ENCODE measurements at regions of chr9 and their contacts with region 1.

Region 1: DNA sequence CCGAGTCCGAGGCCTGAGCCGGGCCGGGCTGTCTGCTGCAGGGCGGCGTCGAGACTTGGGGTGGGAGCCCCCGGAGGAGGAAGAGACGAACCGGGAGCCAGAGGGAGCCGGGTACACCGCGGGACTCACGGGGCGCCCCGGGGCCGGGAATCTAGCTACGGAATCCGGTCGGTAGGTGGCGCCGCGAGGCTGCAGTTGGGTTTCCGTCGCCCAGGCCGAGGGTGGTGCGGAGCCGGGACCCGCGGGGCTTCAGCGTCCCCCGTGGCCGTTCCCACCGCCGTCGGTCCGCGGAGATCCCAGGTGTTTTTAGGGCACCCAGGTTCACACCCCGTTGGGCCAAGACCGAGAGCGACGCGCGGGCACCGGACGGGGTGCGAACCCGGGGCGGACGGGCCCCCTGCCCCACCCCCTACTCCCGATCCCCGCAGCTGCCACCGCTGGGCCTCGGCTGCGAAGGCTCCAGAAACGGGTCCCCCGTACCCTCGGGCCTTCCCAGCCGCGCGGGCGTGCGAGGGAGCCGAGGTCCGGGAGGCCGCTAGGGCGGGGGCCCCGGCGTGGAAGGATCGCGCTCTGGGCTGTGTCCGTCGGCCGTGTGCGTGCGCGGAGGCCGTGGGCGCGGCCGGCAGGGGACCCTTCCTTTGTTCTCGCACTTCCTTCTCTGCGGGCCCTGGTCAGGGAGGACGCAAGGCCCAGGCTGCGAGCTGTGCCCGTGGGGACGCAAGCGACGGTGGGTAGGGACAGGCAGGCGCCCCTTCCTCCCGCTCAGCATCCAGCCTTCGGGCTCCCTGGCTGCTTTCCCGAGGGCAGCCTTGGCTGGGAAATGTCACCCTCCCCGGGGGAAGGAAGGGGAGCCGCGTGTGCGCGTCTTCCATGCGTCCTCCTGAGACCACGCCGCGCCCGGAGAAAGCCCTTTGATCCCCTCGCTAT is 146.6 kb downstream of the GAPVD1 start:
- DNase-seq: peak; percentile 81 to 90 (median 88)
- H3K4me3 ChIP-seq: peak overlapping the region in 2 of 3 donors; percentile 11 to 55
- H3K27ac ChIP-seq: no peak overlapping the region
- H3K4me1 ChIP-seq: peaks cover 0 to 6% (median 0%) of the 10 kb centered on the region in 3 donors
- H3K27me3 ChIP-seq: no peaks in the 10 kb centered on the region
- CTCF ChIP-seq: peak; percentile 67

Region 2: GRCh38 chr9:125638239-125639045 is 230.2 kb after region 1 on chr9:
- intact Hi-C with region 1: no loop called
- DNase-seq: no peak
- H3K4me3 ChIP-seq: no peak overlapping the region
- H3K27ac ChIP-seq: no peak overlapping the region
- H3K4me1 ChIP-seq: peaks cover 0 to 6% (median 0%) of the 10 kb centered on the region in 3 donors
- H3K27me3 ChIP-seq: no peaks in the 10 kb centered on the region
- CTCF ChIP-seq: no peak

Region 3: DNA sequence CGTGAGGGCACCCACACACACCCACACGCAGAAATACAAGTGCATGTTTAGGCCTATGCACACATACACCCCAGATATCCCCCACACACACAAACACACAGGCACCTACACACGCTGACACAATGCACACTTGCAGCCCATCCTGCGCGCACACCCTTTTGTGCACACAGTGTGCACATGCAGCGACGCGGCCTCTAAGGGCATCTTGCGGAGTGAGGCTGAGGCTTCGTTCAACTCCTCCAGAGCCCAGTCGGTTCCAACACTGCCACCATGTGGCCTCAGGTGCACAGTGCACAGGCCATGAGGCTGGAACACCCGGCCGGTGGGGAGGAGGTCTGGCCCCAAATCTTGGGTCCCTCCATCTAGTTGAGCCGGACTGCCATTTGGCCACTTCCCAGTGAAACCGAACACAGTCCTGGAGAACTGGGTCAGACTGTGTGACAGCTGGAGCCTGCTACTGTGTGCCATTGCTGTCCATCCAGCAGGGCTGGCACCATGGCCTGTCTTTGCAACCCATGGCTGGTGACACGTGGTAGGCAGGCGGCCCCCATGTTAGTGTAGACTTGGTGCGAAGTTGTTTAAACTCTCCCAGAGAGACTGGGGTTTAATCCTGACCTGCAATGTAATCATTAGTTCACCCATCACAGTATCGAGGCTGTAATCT is 820.7 kb after region 1 on chr9:
- intact Hi-C with region 1: loop called (anchors 10 kb)
- DNase-seq: peak in 4 of 5 donors; percentile 74 to 84 (median 78)
- H3K4me3 ChIP-seq: no peak overlapping the region
- H3K27ac ChIP-seq: no peak overlapping the region
- H3K4me1 ChIP-seq: no peaks in the 10 kb centered on the region
- H3K27me3 ChIP-seq: no peaks in the 10 kb centered on the region
- CTCF ChIP-seq: peak; percentile 92